Activated T-helper 2 cell treated with anti-CD3 and anti-CD28 coated beads, Interferon-gamma antibody, Interleukin-2, Interleukin-4, amounts not matched to agents 10 μg/mL and 5 μg/mL and 100 μg/mL, durations not matched to agents 14 hours and 24 hours and 36 hours (primary cell): ENCODE measurements at regions of chr1 and their contacts with region 1.

Region 1: DNA sequence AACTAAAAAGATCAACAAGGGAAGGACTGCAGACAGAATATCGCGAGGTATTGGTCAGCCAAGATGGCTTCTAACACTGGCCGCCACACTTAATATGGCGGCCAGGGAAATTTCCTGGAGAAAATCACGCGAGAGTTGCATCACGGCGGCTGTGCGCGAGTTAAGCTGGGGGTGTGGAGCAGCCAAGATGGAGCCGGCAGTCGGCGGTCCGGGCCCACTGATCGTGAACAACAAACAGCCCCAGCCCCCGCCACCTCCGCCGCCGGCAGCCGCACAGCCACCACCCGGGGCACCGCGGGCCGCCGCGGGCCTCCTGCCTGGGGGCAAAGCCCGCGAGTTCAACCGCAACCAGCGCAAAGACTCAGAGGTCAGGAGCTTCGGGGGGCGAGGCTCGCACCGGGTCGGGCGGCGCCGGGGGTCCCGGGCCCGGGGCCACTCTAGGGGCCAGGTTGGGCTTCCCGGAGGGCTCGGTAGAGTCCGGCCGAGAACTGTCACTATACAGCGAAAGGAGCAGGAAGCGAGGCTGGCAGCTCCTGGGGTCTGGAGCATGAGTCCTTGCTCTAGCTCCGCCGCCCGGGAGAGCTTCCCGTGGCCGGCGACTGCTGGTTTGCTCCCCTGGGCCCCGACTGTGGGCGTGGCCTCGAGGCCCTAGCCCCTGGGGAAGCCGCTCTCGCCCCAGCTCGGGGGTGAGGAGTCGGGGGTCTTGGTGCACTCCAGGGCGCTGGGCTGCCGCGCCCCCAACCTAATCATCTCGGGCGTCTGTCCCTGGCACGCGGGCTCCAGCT is at the start of gene STRIP1:
- DNase-seq: peak; percentile 92
- H3K4me3 Mint-ChIP-seq: peak within 1 kb of the TSS; percentile 90
- H3K27ac Mint-ChIP-seq: peak within 1 kb of the TSS; percentile 76
- H3K4me1 Mint-ChIP-seq: peaks cover 40% of the 10 kb centered on the region
- H3K27me3 Mint-ChIP-seq: no peaks in the 10 kb centered on the region
- total RNA-seq, gene STRIP1: 37.4 and 39.1 TPM in 2 replicates

Region 2: DNA sequence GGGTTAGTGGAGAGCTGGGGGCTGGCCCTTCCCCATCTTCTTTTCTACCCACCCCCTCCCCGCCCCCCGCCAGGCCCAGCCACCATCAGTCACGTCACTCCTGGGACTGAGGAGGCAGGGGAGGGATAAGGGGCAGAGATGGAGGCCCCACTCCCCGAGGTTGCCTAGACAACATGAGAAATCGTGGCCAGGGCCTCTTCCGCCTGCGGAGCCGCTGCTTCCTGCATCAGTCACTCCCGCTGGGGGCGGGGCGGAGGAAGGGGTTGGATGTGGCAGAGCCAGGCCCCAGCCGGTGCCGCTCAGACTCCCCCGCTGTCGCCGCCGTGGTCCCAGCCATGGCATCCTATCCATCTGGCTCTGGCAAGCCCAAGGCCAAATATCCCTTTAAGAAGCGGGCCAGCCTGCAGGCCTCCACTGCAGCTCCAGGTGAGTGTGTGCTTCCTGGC is 413.8 kb before region 1 on chr1:
- intact Hi-C with region 1: loop called (anchors 2 kb)
- DNase-seq: peak; percentile 97
- H3K4me3 Mint-ChIP-seq: peak overlapping the region; percentile 93
- H3K27ac Mint-ChIP-seq: peak overlapping the region; percentile 96
- H3K4me1 Mint-ChIP-seq: peaks cover 63% of the 10 kb centered on the region
- H3K27me3 Mint-ChIP-seq: no peaks in the 10 kb centered on the region